ENCODE measurements at regions of chr12 and their contacts with region 1.

Region 1: DNA sequence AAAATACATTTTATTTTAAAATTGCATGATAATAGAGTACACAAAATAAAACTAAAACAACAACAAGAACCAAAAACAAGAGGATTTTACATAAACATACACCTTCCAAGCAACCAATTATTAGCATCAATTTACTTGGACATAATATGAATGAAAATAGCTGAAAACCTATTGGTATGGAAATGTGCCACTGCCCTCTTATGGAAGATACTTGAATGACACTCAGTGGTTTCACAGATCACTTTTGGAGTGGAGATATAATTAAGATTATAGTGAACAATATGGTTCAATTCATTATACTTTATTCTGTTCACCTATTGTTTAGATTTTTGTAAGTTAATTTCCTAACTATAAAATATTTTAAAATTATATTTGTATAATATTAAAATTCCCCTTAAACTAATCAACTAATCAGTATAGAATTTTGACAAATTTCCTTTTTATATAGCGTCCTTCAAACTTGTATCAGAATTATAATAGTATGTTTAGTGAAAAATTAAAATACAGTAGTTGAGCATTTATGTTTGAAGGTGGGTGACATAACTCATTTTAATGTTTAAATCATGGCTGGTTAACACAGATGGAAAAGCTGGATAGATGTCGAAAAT is 70.1 kb downstream of the SLC6A15 start:
- DNase-seq: no peak
- ATAC-seq: no peak
- H3K4me3 ChIP-seq: no peak overlapping the region
- H3K27ac ChIP-seq: no peak overlapping the region
- H3K4me1 ChIP-seq: no peaks in the 10 kb centered on the region
- H3K27me3 ChIP-seq: no peaks in the 10 kb centered on the region
- CTCF ChIP-seq: peak; percentile 24 to 73 (median 64)

Region 2: GRCh38 chr12:84856156-84856900 is 13.8 kb after region 1 on chr12:
- intact Hi-C with region 1: loop called in 1 of 10 experiments (anchors 1 kb)
- DNase-seq: no peak
- ATAC-seq: no peak
- H3K4me3 ChIP-seq: no peak overlapping the region
- H3K27ac ChIP-seq: no peak overlapping the region
- H3K4me1 ChIP-seq: no peaks in the 10 kb centered on the region
- H3K27me3 ChIP-seq: no peaks in the 10 kb centered on the region
- CTCF ChIP-seq: no peak

Measured in heart right ventricle (tissue), 16 donors.